Gastrocnemius medialis (tissue), 4 donors: ENCODE measurements at regions of chr2 and their contacts with region 1.

Region 1: GRCh38 chr2:3238951-3239841 is 138.4 kb downstream of the EIPR1 start:
- DNase-seq: no peak
- ATAC-seq: no peak
- H3K4me3 ChIP-seq: no peak overlapping the region
- H3K27ac ChIP-seq: no peak overlapping the region
- H3K4me1 ChIP-seq: peaks cover 12 to 13% of the 10 kb centered on the region in 2 donors
- H3K27me3 ChIP-seq: no peaks in the 10 kb centered on the region
- CTCF ChIP-seq: no peak
- POLR2A ChIP-seq: no peak

Region 2: DNA sequence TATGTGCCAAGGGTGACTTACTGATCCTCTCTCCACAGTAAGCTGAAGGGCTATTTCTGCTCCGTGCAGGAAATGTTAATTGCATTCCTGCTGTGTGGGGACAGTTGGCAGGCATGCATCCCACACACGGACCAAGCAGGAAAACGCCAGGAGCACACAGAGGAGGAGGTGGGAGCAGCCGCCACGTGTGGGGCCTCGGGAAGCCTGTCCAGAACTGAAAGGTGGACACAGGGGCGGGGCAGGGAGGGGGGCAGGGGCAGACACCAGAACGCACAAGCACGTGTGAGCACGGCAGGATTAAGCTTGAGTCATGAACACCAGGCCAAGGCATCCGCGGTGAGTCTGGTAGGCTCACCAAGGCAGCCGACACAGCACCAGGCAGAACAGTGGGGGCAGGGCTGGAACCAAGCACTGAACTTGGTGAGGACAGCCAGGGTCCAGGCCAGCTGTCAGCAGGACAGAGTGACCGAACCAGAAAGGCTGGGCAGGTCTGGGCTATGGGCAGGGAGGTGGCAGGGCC is 38.7 kb before region 1 on chr2:
- in situ Hi-C with region 1: no loop called
- intact Hi-C with region 1: loop called (anchors 5 kb)
- DNase-seq: peak; percentile 21 to 44
- ATAC-seq: peak; percentile 78 to 81
- H3K4me3 ChIP-seq: no peak overlapping the region
- H3K27ac ChIP-seq: peak overlapping the region in 2 of 4 donors; percentile 52 to 53
- H3K4me1 ChIP-seq: peaks cover 0 to 4% of the 10 kb centered on the region in 2 donors
- H3K27me3 ChIP-seq: no peaks in the 10 kb centered on the region
- CTCF ChIP-seq: no peak
- POLR2A ChIP-seq: no peak